A673 (cell line): ENCODE measurements at regions of chr15 and their contacts with region 1.

Region 1: DNA sequence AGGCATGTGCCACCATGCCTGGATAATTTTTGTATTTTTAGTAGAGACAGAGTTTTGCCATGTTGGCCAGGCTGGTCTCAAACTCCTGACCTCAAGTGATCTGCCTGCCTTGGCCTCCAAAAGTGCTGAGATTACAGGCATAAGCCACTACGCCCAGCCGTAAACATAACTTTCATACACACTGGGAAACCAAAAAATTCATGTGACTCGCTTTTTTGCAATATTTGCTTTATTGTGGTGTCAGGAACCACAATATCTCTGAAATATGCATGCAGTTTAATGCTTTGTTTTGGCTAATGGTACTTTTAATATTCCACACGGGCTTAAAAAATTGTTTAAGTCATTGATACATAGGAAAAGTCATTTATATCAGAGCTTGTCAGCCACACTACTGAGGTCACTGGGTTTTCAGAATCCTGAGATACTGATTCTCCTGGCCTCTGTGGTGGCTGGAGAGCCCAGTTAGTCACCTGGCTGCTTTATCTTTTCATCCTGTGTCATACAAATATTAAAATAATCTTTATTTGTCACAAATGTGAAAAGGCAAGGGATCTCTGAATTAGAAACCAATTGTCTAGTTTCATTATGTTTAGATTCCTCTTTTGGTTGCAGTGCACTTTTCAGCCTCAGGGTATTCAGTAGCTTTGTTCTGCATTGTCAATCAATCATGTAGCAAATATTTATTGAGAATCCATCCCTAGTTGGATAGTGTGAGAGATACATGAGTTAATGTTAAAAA is 10.0 kb downstream of the TMEM62 start:
- DNase-seq: no peak
- H3K4me3 ChIP-seq: no peak overlapping the region
- H3K27ac ChIP-seq: no peak overlapping the region
- H3K4me1 ChIP-seq: no peaks in the 10 kb centered on the region
- H3K27me3 ChIP-seq: no peaks in the 10 kb centered on the region
- CTCF ChIP-seq: no peak

Region 2: GRCh38 chr15:43121863-43122262 is 21.5 kb before region 1 on chr15:
- CTCF ChIA-PET with region 1: interaction called, 12 read pairs
- POLR2A ChIA-PET with region 1: no interaction called
- intact Hi-C with region 1: no loop called
- DNase-seq: no peak
- H3K4me3 ChIP-seq: no peak overlapping the region
- H3K27ac ChIP-seq: no peak overlapping the region
- H3K4me1 ChIP-seq: no peaks in the 10 kb centered on the region
- H3K27me3 ChIP-seq: peaks cover 22% of the 10 kb centered on the region
- CTCF ChIP-seq: no peak